ENCODE measurements at regions of chr10 and their contacts with region 1.

Region 1: GRCh38 chr10:4825851-4826665 is at the start of gene AKR1E2:
- DNase-seq: peak; percentile 89
- ATAC-seq: peak; percentile 93
- H3K4me3 Mint-ChIP-seq: peak within 1 kb of the TSS; percentile 74
- H3K27ac Mint-ChIP-seq: peak within 1 kb of the TSS; percentile 65
- H3K4me1 Mint-ChIP-seq: peaks cover 7% of the 10 kb centered on the region
- H3K27me3 Mint-ChIP-seq: peaks cover 33% of the 10 kb centered on the region
- CTCF ChIP-seq: no peak
- total RNA-seq, gene AKR1E2: 6.1 to 6.5 TPM

Region 2: GRCh38 chr10:5283305-5284158 is 457.5 kb after region 1 on chr10:
- CTCF ChIA-PET with region 1: no interaction called
- POLR2A ChIA-PET with region 1: no interaction called
- intact Hi-C with region 1: loop called (anchors 10 kb)
- DNase-seq: peak; percentile 71
- ATAC-seq: peak; percentile 86
- H3K4me3 Mint-ChIP-seq: no peak overlapping the region
- H3K27ac Mint-ChIP-seq: peak overlapping the region; percentile 7
- H3K4me1 Mint-ChIP-seq: peaks cover 19% of the 10 kb centered on the region
- H3K27me3 Mint-ChIP-seq: no peaks in the 10 kb centered on the region
- CTCF ChIP-seq: peak; percentile 85